ENCODE measurements at regions of chr2 and their contacts with region 1.

Region 1: DNA sequence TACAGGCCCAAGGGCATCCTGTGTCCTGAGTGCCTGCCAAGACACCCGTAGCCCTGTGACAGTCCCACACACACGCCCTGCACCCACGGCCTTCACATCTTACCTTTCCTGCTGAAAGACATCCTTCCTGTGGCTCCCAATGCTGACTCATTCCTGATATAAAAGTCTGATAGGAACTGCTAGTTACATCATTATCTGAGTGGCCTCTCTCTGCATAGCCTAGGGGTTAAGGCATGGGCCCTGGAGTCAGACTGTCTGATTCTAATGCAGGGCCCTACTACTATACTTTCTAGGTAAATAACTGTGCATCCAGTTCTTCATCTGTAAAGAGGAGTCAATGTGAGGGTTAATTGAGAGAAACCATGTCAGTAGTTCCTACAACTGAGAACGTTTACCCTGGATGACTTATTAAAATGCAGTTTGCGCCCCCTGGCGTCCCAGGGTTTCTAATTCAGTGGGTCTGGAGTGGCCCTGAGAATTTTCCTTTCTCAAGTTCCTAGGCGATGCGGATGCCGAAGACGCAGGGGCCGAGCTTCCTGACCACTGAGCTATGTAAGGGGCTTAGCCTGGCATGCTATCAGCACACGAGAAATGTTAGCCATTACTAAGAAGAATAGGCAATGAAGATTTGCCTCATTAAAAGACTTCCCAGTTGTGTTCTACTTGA is 6.0 kb upstream of the GPR45 start:
- DNase-seq: peak; percentile 57 to 87 (median 57)
- ATAC-seq: peak; percentile 88
- H3K4me3 ChIP-seq: no peak overlapping the region
- H3K27ac ChIP-seq: no peak overlapping the region
- H3K4me1 ChIP-seq: peaks cover 2 to 12% of the 10 kb centered on the region in 2 experiments; a peak in 2 of 5 replicates
- H3K27me3 ChIP-seq: peaks cover 22 to 52% of the 10 kb centered on the region in 2 experiments
- CTCF ChIP-seq: peak; percentile 73 to 83 (median 82)
- EP300 ChIP-seq: 0 out of 2 replicates have a peak, but pooled peaks have one; percentile 10
- POLR2A ChIP-seq: no peak
- RAD21 ChIP-seq: peak; percentile 64 to 81

Region 2: DNA sequence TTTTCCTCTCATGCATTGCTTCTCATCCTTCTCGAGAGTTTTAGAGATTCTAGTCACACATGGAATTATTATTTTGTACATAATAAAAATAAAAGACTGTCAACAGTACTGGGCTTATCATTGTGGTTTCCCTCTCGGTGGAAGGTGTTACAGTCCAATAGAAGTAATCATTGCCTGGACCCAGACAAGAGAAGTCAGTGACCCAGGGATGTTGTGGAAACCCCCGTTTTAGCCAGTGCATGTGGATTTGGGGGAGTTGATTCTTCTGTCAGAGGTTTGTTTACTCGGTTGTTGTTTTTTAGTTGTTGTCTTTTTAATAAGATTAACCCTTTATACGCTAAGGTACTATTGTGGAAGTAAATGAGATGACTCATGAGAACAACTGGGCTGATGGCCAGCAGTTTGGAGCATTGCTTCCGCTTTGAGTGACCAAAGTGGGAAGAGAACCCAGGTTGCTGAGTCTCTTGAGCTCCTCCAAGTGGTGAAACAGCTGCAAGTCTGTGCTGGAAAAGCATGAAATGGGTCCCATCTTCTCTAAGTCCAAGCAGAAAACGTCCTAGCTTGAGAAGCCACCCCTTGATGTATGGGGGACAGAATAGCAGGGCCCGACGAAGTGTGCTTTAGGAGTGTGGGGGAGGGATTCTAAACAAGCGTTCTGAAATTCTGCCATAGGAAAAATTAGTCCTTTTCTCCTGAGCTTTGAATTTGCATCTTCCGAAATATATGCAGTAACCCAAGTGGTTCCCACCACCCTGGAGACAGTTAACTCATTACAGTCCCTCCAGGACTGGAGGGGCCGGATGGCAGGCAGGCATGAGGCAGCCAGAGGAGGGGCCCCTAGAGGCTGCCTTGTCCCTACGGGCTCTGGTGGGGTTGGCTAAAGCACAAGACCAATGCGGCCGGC is 55.8 kb before region 1 on chr2:
- CTCF ChIA-PET with region 1: no interaction called
- POLR2A ChIA-PET with region 1: interaction called, 4 read pairs
- in situ Hi-C with region 1: no loop called
- intact Hi-C with region 1: loop called (anchors 5 kb)
- DNase-seq: peak; percentile 58 to 78 (median 64)
- ATAC-seq: peak; percentile 92
- H3K4me3 ChIP-seq: no peak overlapping the region
- H3K27ac ChIP-seq: no peak overlapping the region
- H3K4me1 ChIP-seq: peaks cover 3% of the 10 kb centered on the region in 2 experiments; a peak in 1 of 5 replicates
- H3K27me3 ChIP-seq: peaks cover 23 to 57% of the 10 kb centered on the region in 2 experiments
- CTCF ChIP-seq: peak; percentile 66 to 79 (median 78)
- EP300 ChIP-seq: no peak
- POLR2A ChIP-seq: no peak
- RAD21 ChIP-seq: peak; percentile 45 to 63

Region 3: DNA sequence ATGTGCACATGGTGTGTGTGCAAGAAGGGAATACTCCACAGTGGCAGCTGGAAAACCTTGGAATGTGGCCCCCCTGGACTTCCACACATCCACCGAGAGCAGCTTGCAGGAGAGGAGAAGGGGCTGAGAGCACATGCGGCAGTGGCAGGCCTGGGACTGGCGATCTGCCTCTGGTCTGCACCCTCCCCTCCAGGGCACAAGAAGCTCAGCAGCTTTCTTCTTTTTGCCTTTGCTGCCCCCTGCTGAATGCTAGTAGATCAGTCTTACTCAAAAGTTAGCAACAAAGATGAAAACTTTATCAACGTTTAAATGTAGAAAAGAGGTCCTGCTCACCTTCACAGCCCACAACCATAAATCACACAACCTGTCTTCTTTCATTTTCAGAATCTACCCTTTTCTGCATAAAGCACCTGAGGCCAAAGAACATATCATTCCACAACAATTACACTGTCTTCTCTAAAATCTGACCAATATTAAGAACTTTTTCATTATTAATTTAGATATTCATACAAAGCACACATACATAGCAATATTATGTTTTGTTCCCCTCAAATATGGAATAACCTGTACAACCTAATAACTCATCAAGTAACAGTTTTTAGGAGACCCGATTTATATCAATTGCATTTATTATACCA is 59.4 kb after region 1 on chr2:
- CTCF ChIA-PET with region 1: no interaction called
- POLR2A ChIA-PET with region 1: no interaction called
- in situ Hi-C with region 1: no loop called
- intact Hi-C with region 1: loop called (anchors 5 kb)
- DNase-seq: peak; percentile 59 to 67 (median 66)
- ATAC-seq: peak; percentile 98
- H3K4me3 ChIP-seq: no peak overlapping the region
- H3K27ac ChIP-seq: no peak overlapping the region
- H3K4me1 ChIP-seq: no peaks in the 10 kb centered on the region
- H3K27me3 ChIP-seq: no peaks in the 10 kb centered on the region
- CTCF ChIP-seq: peak; percentile 65 to 73 (median 73)
- EP300 ChIP-seq: no peak
- POLR2A ChIP-seq: no peak
- RAD21 ChIP-seq: peak; percentile 36 to 59

Region 4: DNA sequence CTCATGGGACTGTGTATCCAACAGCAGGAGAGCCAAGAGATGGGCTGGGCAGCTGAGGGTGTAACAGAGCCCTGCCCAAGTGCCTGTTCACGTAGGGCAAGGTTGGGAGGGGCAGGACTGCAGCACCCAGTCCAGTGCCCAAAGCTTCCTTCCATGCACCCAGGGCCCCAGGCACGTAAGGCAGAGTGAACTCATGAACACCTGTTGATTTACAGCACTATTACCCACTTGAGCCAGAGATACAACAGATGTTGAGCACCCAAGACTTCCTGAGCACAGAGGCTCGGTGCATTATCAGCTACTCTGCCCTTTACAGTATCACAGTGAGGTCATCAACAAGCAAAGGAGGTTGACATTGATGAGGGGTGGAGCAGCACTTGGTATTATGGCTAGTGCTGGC is 213.6 kb after region 1 on chr2:
- CTCF ChIA-PET with region 1: no interaction called
- POLR2A ChIA-PET with region 1: no interaction called
- in situ Hi-C with region 1: no loop called
- intact Hi-C with region 1: no loop called
- DNase-seq: peak in 2 of 4 experiments; percentile 34 to 41
- ATAC-seq: peak; percentile 87
- H3K4me3 ChIP-seq: no peak overlapping the region
- H3K27ac ChIP-seq: no peak overlapping the region
- H3K4me1 ChIP-seq: peaks cover 3 to 9% of the 10 kb centered on the region in 2 experiments; a peak in 3 of 5 replicates
- H3K27me3 ChIP-seq: no peaks in the 10 kb centered on the region
- CTCF ChIP-seq: no peak
- EP300 ChIP-seq: no peak
- POLR2A ChIP-seq: no peak
- RAD21 ChIP-seq: no peak